Gastrocnemius medialis (tissue), 4 donors: ENCODE measurements at regions of chr4 and their contacts with region 1.

Region 1: GRCh38 chr4:11428899-11429698 is 405 bp upstream of the HS3ST1 start:
- DNase-seq: peak; percentile 49 to 50
- ATAC-seq: peak; percentile 59 to 71
- H3K4me3 ChIP-seq: peak overlapping the region; percentile 45 to 57 (median 52)
- H3K27ac ChIP-seq: no peak overlapping the region
- H3K4me1 ChIP-seq: no peaks in the 10 kb centered on the region
- H3K27me3 ChIP-seq: peaks cover 7 to 35% (median 21%) of the 10 kb centered on the region in 3 donors
- CTCF ChIP-seq: peak in 4 of 5 experiments; percentile 9 to 42 (median 38)
- POLR2A ChIP-seq: no peak

Region 2: GRCh38 chr4:10577018-10577417 is 852.1 kb before region 1 on chr4:
- in situ Hi-C with region 1: loop called in 2 of 4 experiments (anchors 25 kb)
- intact Hi-C with region 1: loop called (anchors 10 kb)
- DNase-seq: no peak
- ATAC-seq: no peak
- H3K4me3 ChIP-seq: no peak overlapping the region
- H3K27ac ChIP-seq: no peak overlapping the region
- H3K4me1 ChIP-seq: no peaks in the 10 kb centered on the region
- H3K27me3 ChIP-seq: no peaks in the 10 kb centered on the region
- CTCF ChIP-seq: no peak
- POLR2A ChIP-seq: no peak

Region 3: DNA sequence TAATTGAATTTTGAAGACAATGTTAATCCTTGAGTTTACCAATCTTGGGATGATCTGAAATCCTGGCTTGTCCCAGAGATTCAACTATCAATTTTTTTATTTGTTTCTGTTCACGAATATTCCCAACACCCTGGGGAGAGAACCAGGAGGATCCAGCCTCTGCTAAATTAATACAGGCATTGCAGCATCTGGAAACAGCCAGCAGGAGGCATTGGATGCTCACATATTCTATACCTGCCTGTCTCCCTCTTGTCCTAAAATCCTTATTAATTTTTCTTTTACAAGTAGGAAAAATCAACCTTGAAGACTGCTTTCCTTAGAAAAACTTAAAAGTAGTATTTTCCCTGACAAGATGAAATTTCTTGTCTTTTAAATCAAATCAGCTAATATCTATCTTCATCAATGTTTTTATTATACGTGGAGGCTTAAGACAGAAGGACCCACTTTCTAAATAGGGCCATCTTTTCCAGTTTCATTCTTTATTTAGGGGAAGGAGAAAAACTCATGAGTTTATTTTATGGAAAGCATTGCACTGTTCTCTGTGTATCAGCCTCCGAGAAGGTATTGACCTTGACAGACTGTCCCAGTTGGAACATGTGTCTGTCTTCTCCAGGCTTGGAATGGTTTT is 846.9 kb before region 1 on chr4:
- in situ Hi-C with region 1: loop called in 2 of 4 experiments (anchors 25 kb)
- intact Hi-C with region 1: loop called (anchors 10 kb)
- DNase-seq: no peak
- ATAC-seq: no peak
- H3K4me3 ChIP-seq: no peak overlapping the region
- H3K27ac ChIP-seq: no peak overlapping the region
- H3K4me1 ChIP-seq: no peaks in the 10 kb centered on the region
- H3K27me3 ChIP-seq: no peaks in the 10 kb centered on the region
- CTCF ChIP-seq: peak in 2 of 5 experiments; percentile 44
- POLR2A ChIP-seq: no peak

Region 4: GRCh38 chr4:11312389-11312788 is 116.7 kb before region 1 on chr4:
- in situ Hi-C with region 1: no loop called
- intact Hi-C with region 1: no loop called
- DNase-seq: no peak
- ATAC-seq: peak in 1 of 2 donors; percentile 33
- H3K4me3 ChIP-seq: no peak overlapping the region
- H3K27ac ChIP-seq: no peak overlapping the region
- H3K4me1 ChIP-seq: no peaks in the 10 kb centered on the region
- H3K27me3 ChIP-seq: no peaks in the 10 kb centered on the region
- CTCF ChIP-seq: no peak
- POLR2A ChIP-seq: no peak